ENCODE measurements at regions of chr18 and their contacts with region 1.

Region 1: DNA sequence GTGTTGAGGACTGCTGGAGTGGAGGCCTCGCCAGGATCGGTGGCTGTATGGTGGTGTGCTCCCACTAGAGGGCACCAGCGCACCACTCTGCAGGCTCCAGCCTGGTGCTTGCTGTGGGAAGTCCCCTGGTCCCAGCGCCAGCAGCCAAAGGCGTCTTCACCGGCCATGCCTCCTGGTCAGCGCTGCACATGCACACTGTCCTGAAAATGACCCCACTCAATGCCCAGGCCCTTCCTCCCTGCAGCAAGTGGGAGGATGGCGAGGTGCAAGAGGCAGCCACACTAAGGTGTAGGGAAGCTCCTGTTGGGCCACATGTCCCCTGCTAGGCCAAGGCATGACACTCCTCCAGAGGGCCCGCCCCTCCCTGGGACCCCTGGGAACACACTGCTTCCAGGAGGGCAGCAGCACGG is 136.5 kb downstream of the CTIF start:
- DNase-seq: peak; percentile 89
- ATAC-seq: peak; percentile 96
- H3K4me3 ChIP-seq: no peak overlapping the region
- H3K27ac ChIP-seq: no peak overlapping the region
- H3K4me1 ChIP-seq: peaks cover 23% of the 10 kb centered on the region
- H3K27me3 ChIP-seq: no peaks in the 10 kb centered on the region
- CTCF ChIP-seq: peak; percentile 97
- POLR2A ChIP-seq: no peak
- RAD21 ChIP-seq: peak; percentile 95

Region 2: DNA sequence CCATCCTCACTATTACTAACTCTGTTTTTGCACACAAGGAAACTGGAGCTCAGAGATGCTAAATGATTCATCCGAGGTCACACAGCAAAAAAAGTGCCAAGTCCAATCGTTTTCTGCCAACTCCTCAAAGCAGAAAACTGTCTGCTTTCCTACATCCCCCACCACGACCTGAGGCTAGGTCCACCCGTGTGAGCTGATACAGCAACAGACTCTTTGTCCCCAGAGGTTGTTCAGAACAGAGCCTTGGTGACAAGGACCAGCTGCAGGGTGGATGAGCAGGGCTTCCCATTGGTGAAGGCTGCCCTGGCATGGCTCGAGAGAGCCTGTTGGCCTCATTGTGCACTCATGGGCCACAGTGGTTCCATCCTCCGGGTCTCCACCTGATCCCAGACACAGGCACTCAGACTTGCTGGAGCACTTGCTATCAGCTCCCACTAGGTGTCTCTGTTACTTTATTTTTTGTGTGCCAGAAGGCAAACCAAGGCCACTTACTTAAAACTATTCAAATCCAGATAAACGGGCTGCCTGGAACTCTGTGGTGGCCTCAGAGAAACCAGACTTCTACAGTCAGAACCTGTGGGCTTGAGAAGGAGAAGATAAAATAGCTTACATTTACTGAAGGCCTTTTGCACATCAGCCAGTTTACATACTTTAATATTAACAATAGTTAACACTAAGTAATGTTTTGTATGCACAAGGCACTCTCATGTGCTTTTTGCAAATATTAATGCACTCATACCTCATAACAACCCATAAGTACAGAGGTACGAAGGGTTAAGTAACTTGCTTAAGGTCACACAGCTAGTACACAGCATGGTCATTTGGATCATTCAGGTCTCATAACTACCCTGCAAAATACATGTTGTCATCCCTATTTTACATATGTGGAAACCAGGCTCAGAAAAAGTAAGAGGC is 199.5 kb before region 1 on chr18:
- CTCF ChIA-PET with region 1: no interaction called
- POLR2A ChIA-PET with region 1: no interaction called
- dilution Hi-C with region 1: no loop called
- in situ Hi-C with region 1: no loop called
- intact Hi-C with region 1: loop called (anchors 2 kb)
- DNase-seq: peak; percentile 82
- ATAC-seq: peak; percentile 96
- H3K4me3 ChIP-seq: no peak overlapping the region
- H3K27ac ChIP-seq: no peak overlapping the region
- H3K4me1 ChIP-seq: no peaks in the 10 kb centered on the region
- H3K27me3 ChIP-seq: peaks cover 12% of the 10 kb centered on the region
- CTCF ChIP-seq: peak; percentile 86
- POLR2A ChIP-seq: no peak
- RAD21 ChIP-seq: peak; percentile 97

Region 3: DNA sequence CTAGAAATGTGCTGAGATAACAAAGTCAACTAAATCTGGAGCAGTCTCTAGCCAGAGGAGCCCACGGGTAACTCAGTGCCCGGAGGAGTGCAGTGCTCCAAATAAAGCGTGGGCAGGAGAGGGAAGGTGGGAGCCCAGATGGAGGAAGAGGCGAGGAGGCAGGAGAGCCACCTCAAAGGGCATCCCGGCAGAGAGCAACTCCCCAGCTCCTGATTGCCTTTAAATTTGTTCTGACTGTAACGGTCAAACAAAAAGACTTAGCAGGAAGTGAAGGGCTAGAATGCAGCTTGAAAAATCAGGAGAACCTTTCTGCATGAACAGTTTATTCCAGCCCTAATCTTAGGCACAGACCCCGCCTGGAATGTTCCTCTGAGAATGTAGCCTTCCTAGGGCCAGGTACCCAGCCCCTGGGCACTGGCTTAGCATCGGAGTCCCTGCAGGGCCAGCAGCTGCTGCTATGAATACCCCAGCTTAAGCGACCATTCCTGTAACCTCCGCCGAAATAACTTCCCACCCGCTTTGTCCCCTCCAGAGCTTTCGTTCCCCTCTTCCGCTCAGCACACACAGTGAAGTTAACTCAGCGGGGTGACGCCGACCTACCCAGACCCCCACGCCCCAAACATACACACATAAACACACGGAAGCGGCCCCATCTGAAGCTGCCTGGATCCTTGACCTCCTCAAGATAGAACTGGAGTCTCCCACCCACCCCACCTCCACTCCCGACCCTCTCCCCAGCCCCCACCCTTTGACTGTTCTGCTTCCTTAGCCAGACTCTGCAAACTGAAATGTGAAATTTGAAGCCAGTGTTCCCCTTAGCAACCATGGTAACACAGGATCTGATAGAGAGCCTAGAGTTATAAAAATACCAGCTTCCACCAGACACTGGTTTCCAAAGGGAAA is 152.2 kb after region 1 on chr18:
- CTCF ChIA-PET with region 1: interaction called, 3 read pairs
- POLR2A ChIA-PET with region 1: no interaction called
- dilution Hi-C with region 1: no loop called
- in situ Hi-C with region 1: no loop called
- intact Hi-C with region 1: loop called (anchors 5 kb)
- DNase-seq: peak; percentile 73
- ATAC-seq: peak; percentile 80
- H3K4me3 ChIP-seq: no peak overlapping the region
- H3K27ac ChIP-seq: peak overlapping the region; percentile 34
- H3K4me1 ChIP-seq: peaks cover 27% of the 10 kb centered on the region
- H3K27me3 ChIP-seq: no peaks in the 10 kb centered on the region
- CTCF ChIP-seq: no peak
- POLR2A ChIP-seq: no peak
- RAD21 ChIP-seq: no peak

Region 4: DNA sequence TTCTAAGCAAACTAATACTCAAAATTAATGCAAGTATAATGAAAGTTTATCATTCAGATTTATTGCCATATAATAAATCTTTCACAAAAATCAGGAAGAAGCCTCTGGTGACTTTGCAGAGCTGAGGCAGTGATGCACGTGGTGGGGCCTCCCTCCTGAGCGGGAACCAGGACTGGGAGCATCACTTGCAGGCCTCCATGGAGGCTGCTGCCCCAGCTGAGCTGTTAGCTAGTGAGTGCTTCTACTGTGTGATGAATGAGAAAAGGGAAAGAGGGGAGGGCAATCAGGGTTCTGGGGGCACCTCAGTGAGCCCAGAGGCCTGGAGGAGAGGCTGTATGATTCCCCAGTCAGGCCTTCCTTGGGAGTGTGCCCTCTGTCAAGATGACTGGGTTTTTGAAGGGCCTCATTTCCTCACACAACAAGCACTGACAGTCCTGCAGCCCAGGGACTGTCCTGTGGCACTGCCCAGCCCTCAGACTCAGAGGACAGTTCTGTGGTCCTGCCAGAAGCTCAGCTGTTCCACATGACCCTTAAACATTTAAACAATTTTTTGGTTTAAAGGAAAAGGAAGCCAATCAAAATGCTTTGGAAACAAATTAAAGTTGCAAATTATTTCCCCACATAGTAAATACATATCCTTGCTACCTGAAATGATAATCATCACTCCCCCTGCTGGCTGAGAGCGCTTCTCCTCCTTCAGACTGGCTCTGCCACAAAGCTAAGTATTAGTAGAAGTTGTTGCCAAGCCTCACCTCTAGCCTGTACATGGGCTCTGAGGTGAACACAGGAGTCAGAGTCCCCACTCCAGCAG is 366.3 kb after region 1 on chr18:
- CTCF ChIA-PET with region 1: no interaction called
- POLR2A ChIA-PET with region 1: no interaction called
- dilution Hi-C with region 1: no loop called
- in situ Hi-C with region 1: no loop called
- intact Hi-C with region 1: loop called (anchors 5 kb)
- DNase-seq: peak; percentile 56
- ATAC-seq: peak; percentile 75; the same call in 1 of the 2 replicates
- H3K4me3 ChIP-seq: no peak overlapping the region
- H3K27ac ChIP-seq: no peak overlapping the region
- H3K4me1 ChIP-seq: peaks cover 2% of the 10 kb centered on the region; the same call in 1 of the 2 replicates
- H3K27me3 ChIP-seq: no peaks in the 10 kb centered on the region
- CTCF ChIP-seq: peak; percentile 64
- POLR2A ChIP-seq: no peak
- RAD21 ChIP-seq: peak; percentile 70

Region 5: DNA sequence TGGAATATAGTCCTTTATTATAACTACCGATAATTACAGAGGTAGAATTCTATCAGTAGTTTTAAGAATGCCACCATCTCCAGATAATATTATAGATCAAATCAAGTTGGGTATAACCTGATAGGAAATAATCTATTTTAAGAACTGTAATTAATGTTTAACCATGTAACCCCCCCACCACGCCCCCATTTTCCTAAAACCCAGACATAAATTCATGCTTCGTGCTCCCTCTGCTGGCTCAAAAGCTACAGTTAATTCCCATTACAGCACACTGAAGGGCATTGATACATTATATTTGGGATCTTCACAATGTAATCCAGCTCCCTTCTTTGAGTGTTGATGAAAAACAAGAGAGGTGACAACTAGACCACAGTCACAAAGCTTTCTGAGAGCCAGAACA is 503.4 kb after region 1 on chr18:
- CTCF ChIA-PET with region 1: no interaction called
- POLR2A ChIA-PET with region 1: no interaction called
- dilution Hi-C with region 1: no loop called
- in situ Hi-C with region 1: loop called (anchors 10 kb)
- intact Hi-C with region 1: loop called (anchors 2 kb)
- DNase-seq: peak; percentile 23
- ATAC-seq: no peak
- H3K4me3 ChIP-seq: no peak overlapping the region
- H3K27ac ChIP-seq: no peak overlapping the region
- H3K4me1 ChIP-seq: peaks cover 5% of the 10 kb centered on the region; the same call in 1 of the 2 replicates
- H3K27me3 ChIP-seq: no peaks in the 10 kb centered on the region
- CTCF ChIP-seq: peak; percentile 56
- POLR2A ChIP-seq: no peak
- RAD21 ChIP-seq: peak; percentile 68

Region 6: DNA sequence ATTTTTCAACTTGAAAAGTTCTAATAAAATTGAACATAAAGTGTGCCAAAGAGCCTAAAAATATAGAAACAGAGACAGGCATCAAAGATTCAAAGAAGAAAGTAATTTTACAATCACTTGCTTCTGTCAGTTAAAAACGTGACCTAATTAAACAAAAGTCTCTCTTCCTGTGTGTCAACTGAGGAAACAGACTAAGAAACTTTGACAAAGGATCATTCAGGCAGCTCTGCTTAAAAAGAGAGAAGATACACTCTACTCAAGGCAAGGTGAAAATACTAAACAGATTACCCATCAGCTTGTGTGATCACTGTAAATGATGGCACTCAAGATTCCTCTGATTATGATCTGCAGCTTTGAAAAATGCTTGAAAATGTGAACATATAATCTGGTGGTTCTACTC is 737.3 kb after region 1 on chr18:
- CTCF ChIA-PET with region 1: interaction called, 8 read pairs
- POLR2A ChIA-PET with region 1: no interaction called
- dilution Hi-C with region 1: no loop called
- in situ Hi-C with region 1: loop called (anchors 10 kb)
- intact Hi-C with region 1: loop called (anchors 2 kb)
- DNase-seq: no peak
- ATAC-seq: no peak
- H3K4me3 ChIP-seq: no peak overlapping the region
- H3K27ac ChIP-seq: no peak overlapping the region
- H3K4me1 ChIP-seq: peaks cover 3% of the 10 kb centered on the region; the same call in 1 of the 2 replicates
- H3K27me3 ChIP-seq: no peaks in the 10 kb centered on the region
- CTCF ChIP-seq: no peak
- POLR2A ChIP-seq: no peak
- RAD21 ChIP-seq: no peak